ENCODE measurements at regions of chr16 and their contacts with region 1.

Region 1: GRCh38 chr16:69073161-69073669 is 32.2 kb upstream of the HAS3 start:
- DNase-seq: no peak
- H3K4me3 Mint-ChIP-seq: no peak overlapping the region
- H3K27ac Mint-ChIP-seq: no peak overlapping the region
- H3K4me1 Mint-ChIP-seq: no peaks in the 10 kb centered on the region
- H3K27me3 Mint-ChIP-seq: no peaks in the 10 kb centered on the region

Region 2: DNA sequence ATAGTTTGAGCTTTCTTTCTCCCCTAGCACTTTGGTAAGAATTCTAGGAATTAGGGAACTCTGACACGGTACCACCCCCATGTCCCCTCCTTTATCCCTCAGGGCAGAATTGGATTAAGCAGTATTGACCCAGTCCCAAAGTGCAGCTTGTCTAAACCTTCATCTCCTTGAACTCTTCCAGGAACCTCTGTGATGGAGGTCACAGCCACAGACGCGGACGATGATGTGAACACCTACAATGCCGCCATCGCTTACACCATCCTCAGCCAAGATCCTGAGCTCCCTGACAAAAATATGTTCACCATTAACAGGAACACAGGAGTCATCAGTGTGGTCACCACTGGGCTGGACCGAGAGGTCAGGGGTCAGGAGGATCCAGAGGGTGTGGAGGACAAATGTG is 261.7 kb before region 1 on chr16:
- CTCF ChIA-PET with region 1: no interaction called
- POLR2A ChIA-PET with region 1: interaction called, 13 read pairs
- DNase-seq: no peak
- H3K4me3 Mint-ChIP-seq: no peak overlapping the region
- H3K27ac Mint-ChIP-seq: no peak overlapping the region
- H3K4me1 Mint-ChIP-seq: no peaks in the 10 kb centered on the region
- H3K27me3 Mint-ChIP-seq: no peaks in the 10 kb centered on the region

Region 3: DNA sequence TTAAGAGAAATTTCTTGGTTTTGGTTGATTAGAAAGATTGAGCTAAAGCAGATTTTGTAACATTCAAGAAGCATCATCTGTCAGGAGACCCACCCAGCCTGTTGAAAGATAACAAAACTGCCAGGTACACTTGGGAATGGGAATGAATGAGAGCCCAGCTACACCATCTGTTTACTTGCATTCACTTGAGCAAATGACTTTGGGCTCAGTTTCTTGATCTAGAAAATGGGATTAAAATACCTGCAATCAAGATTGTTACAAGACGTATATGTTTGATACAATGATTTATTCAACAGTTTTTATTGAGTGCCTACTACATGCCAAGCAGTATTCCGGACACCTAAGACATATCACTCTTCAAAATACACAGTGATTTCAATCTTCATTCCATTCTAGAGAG is 44.1 kb before region 1 on chr16:
- CTCF ChIA-PET with region 1: no interaction called
- POLR2A ChIA-PET with region 1: no interaction called
- DNase-seq: no peak
- H3K4me3 Mint-ChIP-seq: no peak overlapping the region
- H3K27ac Mint-ChIP-seq: no peak overlapping the region
- H3K4me1 Mint-ChIP-seq: no peaks in the 10 kb centered on the region
- H3K27me3 Mint-ChIP-seq: no peaks in the 10 kb centered on the region

Region 4: GRCh38 chr16:69132424-69133252 is 59.4 kb after region 1 on chr16 and contains the starts of genes CHTF8 and UTP4:
- CTCF ChIA-PET with region 1: no interaction called
- POLR2A ChIA-PET with region 1: no interaction called
- DNase-seq: peak; percentile 90
- H3K4me3 Mint-ChIP-seq: peak within 1 kb of the TSS; percentile 96
- H3K27ac Mint-ChIP-seq: peak within 1 kb of the TSS; percentile 93
- H3K4me1 Mint-ChIP-seq: peaks cover 60% of the 10 kb centered on the region
- H3K27me3 Mint-ChIP-seq: no peaks in the 10 kb centered on the region
- total RNA-seq, gene CHTF8: 132 to 165 TPM
- total RNA-seq, gene UTP4: 51.8 to 53.2 TPM